ENCODE measurements at regions of chr2 and their contacts with region 1.

Region 1: GRCh38 chr2:3959372-3959771 is 256.0 kb downstream of the DCDC2C start:
- DNase-seq: peak; percentile 48
- H3K4me3 ChIP-seq: no peak overlapping the region
- H3K27ac ChIP-seq: no peak overlapping the region
- H3K4me1 ChIP-seq: no peaks in the 10 kb centered on the region
- CTCF ChIP-seq: peak; percentile 93

Region 2: GRCh38 chr2:3703753-3704355 is 255.5 kb before region 1 on chr2:
- CTCF ChIA-PET with region 1: no interaction called
- POLR2A ChIA-PET with region 1: no interaction called
- intact Hi-C with region 1: no loop called
- DNase-seq: no peak
- H3K4me3 ChIP-seq: no peak overlapping the region
- H3K27ac ChIP-seq: no peak overlapping the region
- H3K4me1 ChIP-seq: no peaks in the 10 kb centered on the region
- CTCF ChIP-seq: no peak

Region 3: DNA sequence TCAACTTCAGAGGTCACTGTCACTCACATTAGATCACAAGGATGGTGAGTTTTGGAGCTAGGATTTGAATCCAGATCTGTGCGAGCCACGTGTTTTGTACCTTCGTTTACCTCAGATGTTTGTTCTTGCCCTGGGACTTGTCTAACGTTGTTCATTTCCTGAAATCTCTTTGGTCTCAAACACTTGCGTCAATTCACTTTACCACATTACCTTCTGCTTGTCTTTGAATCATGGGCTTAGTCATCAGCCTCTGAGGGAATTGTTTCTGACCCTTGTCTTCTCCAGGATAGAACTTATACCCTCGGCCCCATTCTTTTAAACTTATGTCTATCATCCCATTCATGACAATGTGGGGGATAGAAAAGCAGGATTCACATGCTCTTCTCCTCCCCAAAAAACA is 26.7 kb after region 1 on chr2:
- CTCF ChIA-PET with region 1: no interaction called
- POLR2A ChIA-PET with region 1: no interaction called
- intact Hi-C with region 1: no loop called
- DNase-seq: no peak
- H3K4me3 ChIP-seq: no peak overlapping the region
- H3K27ac ChIP-seq: no peak overlapping the region
- H3K4me1 ChIP-seq: no peaks in the 10 kb centered on the region
- CTCF ChIP-seq: no peak

Region 4: GRCh38 chr2:4715069-4715468 is 755.7 kb after region 1 on chr2:
- CTCF ChIA-PET with region 1: no interaction called
- POLR2A ChIA-PET with region 1: no interaction called
- intact Hi-C with region 1: loop called (anchors 2 kb)
- DNase-seq: peak; percentile 22
- H3K4me3 ChIP-seq: no peak overlapping the region
- H3K27ac ChIP-seq: no peak overlapping the region
- H3K4me1 ChIP-seq: no peaks in the 10 kb centered on the region
- CTCF ChIP-seq: peak; percentile 77

Region 5: GRCh38 chr2:4762951-4763376 is 803.6 kb after region 1 on chr2:
- CTCF ChIA-PET with region 1: no interaction called
- POLR2A ChIA-PET with region 1: no interaction called
- intact Hi-C with region 1: loop called (anchors 1 kb)
- DNase-seq: peak; percentile 55
- H3K4me3 ChIP-seq: no peak overlapping the region
- H3K27ac ChIP-seq: no peak overlapping the region
- H3K4me1 ChIP-seq: no peaks in the 10 kb centered on the region
- CTCF ChIP-seq: peak; percentile 86

Region 6: GRCh38 chr2:5070257-5070656 is 1110.9 kb after region 1 on chr2:
- CTCF ChIA-PET with region 1: no interaction called
- POLR2A ChIA-PET with region 1: interaction called, 10 read pairs
- intact Hi-C with region 1: no loop called
- DNase-seq: no peak
- H3K4me3 ChIP-seq: no peak overlapping the region
- H3K27ac ChIP-seq: no peak overlapping the region
- H3K4me1 ChIP-seq: no peaks in the 10 kb centered on the region
- CTCF ChIP-seq: no peak

Region 7: GRCh38 chr2:5365871-5366461 is 1406.6 kb after region 1 on chr2:
- CTCF ChIA-PET with region 1: no interaction called
- POLR2A ChIA-PET with region 1: no interaction called
- intact Hi-C with region 1: loop called (anchors 10 kb)
- DNase-seq: peak; percentile 60
- H3K4me3 ChIP-seq: no peak overlapping the region
- H3K27ac ChIP-seq: no peak overlapping the region
- H3K4me1 ChIP-seq: no peaks in the 10 kb centered on the region
- CTCF ChIP-seq: peak; percentile 91